HEK293 (cell line): ENCODE measurements at regions of chr16 and their contacts with region 1.

Region 1: GRCh38 chr16:71412270-71413160 is 29.3 kb downstream of the TLE7 start:
- H3K4me3 ChIP-seq: peak overlapping the region; percentile 23; the same call in 1 of the 2 replicates
- H3K27ac ChIP-seq: no peak overlapping the region
- H3K4me1 ChIP-seq: no peaks in the 10 kb centered on the region
- CTCF ChIP-seq: peak; percentile 60

Region 2: DNA sequence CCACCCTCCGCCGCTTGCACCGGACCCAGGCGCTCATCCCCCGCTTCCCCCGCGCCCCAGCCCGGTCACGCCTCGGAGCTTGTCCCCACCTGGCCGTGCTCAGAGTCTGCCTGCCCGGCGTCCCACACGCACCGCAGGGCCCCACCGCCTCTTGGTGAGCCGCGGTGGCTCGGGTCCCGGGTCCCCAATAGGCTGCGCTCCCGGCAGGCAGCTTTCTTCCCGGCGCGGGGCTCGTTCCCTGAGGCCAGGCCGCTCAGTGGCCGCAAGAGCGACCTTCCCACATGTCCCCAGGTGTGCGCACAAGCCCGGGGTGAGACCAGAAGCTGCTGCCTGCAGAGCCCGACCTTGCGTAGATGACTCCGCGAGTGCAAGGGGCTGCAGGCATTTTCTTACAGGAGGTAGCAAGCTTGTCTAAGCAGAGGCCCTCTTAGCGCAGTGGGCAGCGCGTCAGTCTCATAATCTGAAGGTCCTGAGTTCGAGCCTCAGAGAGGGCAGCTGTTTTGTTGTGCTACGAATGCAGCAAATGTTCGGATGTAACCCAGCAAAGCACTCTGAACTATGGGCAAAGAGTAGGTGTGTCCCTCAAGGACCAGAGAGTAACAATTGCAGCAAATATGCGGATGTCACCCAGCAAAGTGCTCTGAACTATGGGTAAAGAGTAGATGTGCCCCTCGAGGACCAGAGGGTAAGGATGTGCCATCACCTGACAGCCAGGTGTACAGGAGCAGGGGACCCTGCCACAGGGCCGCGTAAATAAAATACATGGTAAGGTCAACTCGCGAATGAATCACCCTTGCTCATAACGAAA is 13.8 kb after region 1 on chr16:
- CTCF ChIA-PET with region 1: interaction called, 77 read pairs
- POLR2A ChIA-PET with region 1: no interaction called
- H3K4me3 ChIP-seq: peak overlapping the region; percentile 59
- H3K27ac ChIP-seq: peak overlapping the region; percentile 27; the same call in 1 of the 2 replicates
- H3K4me1 ChIP-seq: no peaks in the 10 kb centered on the region
- CTCF ChIP-seq: 0 out of 2 replicates have a peak, but pooled peaks have one; percentile 17

Region 3: DNA sequence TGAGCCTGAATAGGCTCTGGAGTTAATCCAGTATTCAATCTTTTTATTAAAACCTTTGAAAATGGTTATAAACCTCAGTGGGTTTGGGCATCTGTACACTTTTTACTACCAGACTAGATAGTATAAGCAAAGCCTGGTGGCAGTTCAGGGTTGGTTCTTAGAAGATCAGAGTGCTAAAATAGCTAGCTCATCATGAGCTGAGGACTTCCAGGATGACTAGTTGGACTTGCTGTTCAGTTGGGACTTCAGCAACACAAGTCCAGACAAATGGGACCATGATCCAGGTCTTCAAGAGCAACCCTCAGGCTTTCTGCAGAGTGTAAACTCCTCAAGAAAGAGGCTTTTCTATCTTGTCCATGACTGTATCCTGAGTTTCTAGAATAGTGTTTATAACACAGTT is 77.8 kb after region 1 on chr16:
- CTCF ChIA-PET with region 1: interaction called, 10 read pairs
- POLR2A ChIA-PET with region 1: no interaction called
- H3K4me3 ChIP-seq: no peak overlapping the region
- H3K27ac ChIP-seq: no peak overlapping the region
- H3K4me1 ChIP-seq: no peaks in the 10 kb centered on the region
- CTCF ChIP-seq: no peak

Region 4: DNA sequence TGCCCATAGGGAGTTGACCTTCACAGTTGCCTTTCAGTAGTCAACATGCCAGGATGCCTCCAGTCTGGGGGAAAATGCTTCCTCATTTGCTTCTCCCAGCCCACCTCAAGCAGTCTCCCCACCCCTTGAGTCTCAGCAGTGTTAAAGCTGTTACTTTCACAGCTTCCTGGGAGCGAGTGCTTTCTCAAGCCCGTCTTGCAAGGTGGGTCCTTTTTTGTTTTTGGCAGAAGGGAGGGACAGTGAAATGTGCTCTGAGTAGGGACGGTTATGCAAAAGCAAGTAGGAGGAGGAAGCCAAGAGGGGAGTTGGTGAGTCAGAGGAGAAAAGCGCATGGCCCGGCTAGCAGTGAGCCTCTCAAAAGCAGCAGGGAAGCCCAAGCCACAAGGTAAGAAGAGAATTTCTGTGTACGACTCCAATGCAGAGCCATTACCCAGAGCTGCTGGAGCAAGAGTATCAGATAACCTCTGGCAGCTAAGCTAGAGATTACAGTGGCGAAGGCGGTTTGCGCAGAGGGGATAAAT is 113.7 kb after region 1 on chr16 and contains the start of gene CHST4:
- CTCF ChIA-PET with region 1: interaction called, 12 read pairs
- POLR2A ChIA-PET with region 1: no interaction called
- H3K4me3 ChIP-seq: peak within 1 kb of the TSS; percentile 17
- H3K27ac ChIP-seq: no peak within 1 kb of the TSS; the same call in 1 of the 2 replicates
- H3K4me1 ChIP-seq: peaks cover 6% of the 10 kb centered on the region
- CTCF ChIP-seq: no peak